Mammary epithelial cell (primary cell): ENCODE measurements at regions of chr2 and their contacts with region 1.

Region 1: DNA sequence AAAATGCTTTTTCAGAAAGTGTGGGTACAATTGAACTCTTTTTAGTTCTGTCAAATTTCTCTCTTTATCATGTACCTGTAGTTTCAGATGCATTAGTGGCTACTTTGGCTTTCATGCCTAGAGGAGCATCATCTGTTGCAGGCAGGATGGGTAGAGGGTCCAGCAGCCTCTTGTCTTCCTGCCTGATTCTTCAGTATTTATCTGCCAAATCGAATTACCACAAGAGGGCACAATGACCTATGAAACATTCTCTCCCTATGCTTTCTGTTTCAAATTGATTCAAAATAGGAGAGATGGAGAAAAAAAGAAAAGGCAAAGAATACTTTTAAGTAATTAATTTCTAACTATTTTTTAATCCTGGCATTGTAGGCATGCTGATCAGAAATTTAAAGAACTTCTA is 477.2 kb downstream of the TRIB2 start:
- DNase-seq: peak; percentile 5
- H3K4me3 ChIP-seq: no peak overlapping the region
- H3K27ac ChIP-seq: no peak overlapping the region
- H3K4me1 ChIP-seq: no peaks in the 10 kb centered on the region
- H3K27me3 ChIP-seq: no peaks in the 10 kb centered on the region
- CTCF ChIP-seq: peak; percentile 25 to 53

Region 2: GRCh38 chr2:13056259-13056843 is 137.5 kb before region 1 on chr2:
- CTCF ChIA-PET with region 1: no interaction called
- dilution Hi-C with region 1: no loop called
- in situ Hi-C with region 1: no loop called
- intact Hi-C with region 1: loop called (anchors 2 kb)
- DNase-seq: no peak
- H3K4me3 ChIP-seq: no peak overlapping the region
- H3K27ac ChIP-seq: no peak overlapping the region
- H3K4me1 ChIP-seq: peaks cover 3% of the 10 kb centered on the region
- H3K27me3 ChIP-seq: peaks cover 1% of the 10 kb centered on the region
- CTCF ChIP-seq: peak; percentile 49 to 65

Region 3: GRCh38 chr2:13156916-13157315 is 37.0 kb before region 1 on chr2:
- CTCF ChIA-PET with region 1: no interaction called
- dilution Hi-C with region 1: no loop called
- in situ Hi-C with region 1: no loop called
- intact Hi-C with region 1: no loop called
- DNase-seq: no peak
- H3K4me3 ChIP-seq: no peak overlapping the region
- H3K27ac ChIP-seq: no peak overlapping the region
- H3K4me1 ChIP-seq: no peaks in the 10 kb centered on the region
- H3K27me3 ChIP-seq: peaks cover 4% of the 10 kb centered on the region
- CTCF ChIP-seq: no peak

Region 4: GRCh38 chr2:14831458-14831857 is 1637.6 kb after region 1 on chr2:
- CTCF ChIA-PET with region 1: no interaction called
- dilution Hi-C with region 1: no loop called
- in situ Hi-C with region 1: no loop called
- intact Hi-C with region 1: loop called (anchors 10 kb)
- DNase-seq: peak; percentile 11
- H3K4me3 ChIP-seq: no peak overlapping the region
- H3K27ac ChIP-seq: no peak overlapping the region
- H3K4me1 ChIP-seq: peaks cover 4% of the 10 kb centered on the region
- H3K27me3 ChIP-seq: no peaks in the 10 kb centered on the region
- CTCF ChIP-seq: peak; percentile 16 to 47